ENCODE measurements at regions of chr2 and their contacts with region 1.

Region 1: GRCh38 chr2:236569573-236569973 is at the start of gene ACKR3:
- DNase-seq: peak; percentile 47 to 90 (median 78)
- ATAC-seq: peak; percentile 92 to 95 (median 94)
- H3K4me3 ChIP-seq: peak within 1 kb of the TSS; percentile 27 to 69
- H3K4me3 Mint-ChIP-seq: peak within 1 kb of the TSS; percentile 81 to 84 (median 84)
- H3K27ac ChIP-seq: peak within 1 kb of the TSS; percentile 37
- H3K27ac Mint-ChIP-seq: peak within 1 kb of the TSS in 1 of 2 donors; percentile 53
- H3K4me1 ChIP-seq: peaks cover 15 to 28% of the 10 kb centered on the region in 2 experiments
- H3K4me1 Mint-ChIP-seq: peaks cover 21 to 28% (median 21%) of the 10 kb centered on the region in 3 donors
- H3K27me3 ChIP-seq: no peaks in the 10 kb centered on the region
- H3K27me3 Mint-ChIP-seq: no peaks in the 10 kb centered on the region
- total RNA-seq, gene ACKR3: 3.3 to 6.9 (median 4.5) TPM

Region 2: DNA sequence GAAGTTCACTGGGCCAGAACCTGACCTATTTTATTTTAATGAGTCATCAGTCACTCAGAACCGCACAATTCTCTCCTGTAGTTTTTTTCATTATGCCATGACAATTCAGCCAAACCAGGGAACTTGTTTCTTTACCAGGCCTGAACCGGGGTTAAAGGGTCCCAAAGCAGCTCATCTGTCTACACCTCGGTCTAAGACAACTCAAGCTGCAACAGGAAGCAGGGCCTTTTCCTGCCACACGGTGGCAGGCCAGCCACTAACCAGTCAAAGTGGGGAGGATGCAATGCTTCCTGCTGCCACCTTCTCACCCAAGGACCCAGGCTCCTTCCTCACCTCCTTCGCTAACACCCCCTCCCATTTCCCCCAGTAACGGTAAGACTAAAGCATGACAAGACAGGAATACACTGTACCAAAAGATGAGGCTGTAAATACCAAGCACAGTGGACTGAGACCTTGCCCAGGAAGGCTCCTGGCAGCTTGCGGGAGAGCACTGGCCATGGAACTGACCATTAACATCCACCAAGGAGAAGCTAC is 56.6 kb before region 1 on chr2:
- CTCF ChIA-PET with region 1: interaction called, 25 to 109 read pairs
- POLR2A ChIA-PET with region 1: interaction called in 1 of 2 experiments, 6 read pairs
- DNase-seq: peak; percentile 33 to 82 (median 67)
- ATAC-seq: peak; percentile 92 to 98 (median 98)
- H3K4me3 ChIP-seq: no peak overlapping the region
- H3K4me3 Mint-ChIP-seq: no peak overlapping the region
- H3K27ac ChIP-seq: no peak overlapping the region
- H3K27ac Mint-ChIP-seq: no peak overlapping the region
- H3K4me1 ChIP-seq: peaks cover 0 to 7% of the 10 kb centered on the region in 2 experiments
- H3K4me1 Mint-ChIP-seq: no peaks in the 10 kb centered on the region
- H3K27me3 ChIP-seq: peaks cover 0 to 5% of the 10 kb centered on the region in 2 experiments
- H3K27me3 Mint-ChIP-seq: peaks cover 0 to 10% of the 10 kb centered on the region in 2 donors

Region 3: DNA sequence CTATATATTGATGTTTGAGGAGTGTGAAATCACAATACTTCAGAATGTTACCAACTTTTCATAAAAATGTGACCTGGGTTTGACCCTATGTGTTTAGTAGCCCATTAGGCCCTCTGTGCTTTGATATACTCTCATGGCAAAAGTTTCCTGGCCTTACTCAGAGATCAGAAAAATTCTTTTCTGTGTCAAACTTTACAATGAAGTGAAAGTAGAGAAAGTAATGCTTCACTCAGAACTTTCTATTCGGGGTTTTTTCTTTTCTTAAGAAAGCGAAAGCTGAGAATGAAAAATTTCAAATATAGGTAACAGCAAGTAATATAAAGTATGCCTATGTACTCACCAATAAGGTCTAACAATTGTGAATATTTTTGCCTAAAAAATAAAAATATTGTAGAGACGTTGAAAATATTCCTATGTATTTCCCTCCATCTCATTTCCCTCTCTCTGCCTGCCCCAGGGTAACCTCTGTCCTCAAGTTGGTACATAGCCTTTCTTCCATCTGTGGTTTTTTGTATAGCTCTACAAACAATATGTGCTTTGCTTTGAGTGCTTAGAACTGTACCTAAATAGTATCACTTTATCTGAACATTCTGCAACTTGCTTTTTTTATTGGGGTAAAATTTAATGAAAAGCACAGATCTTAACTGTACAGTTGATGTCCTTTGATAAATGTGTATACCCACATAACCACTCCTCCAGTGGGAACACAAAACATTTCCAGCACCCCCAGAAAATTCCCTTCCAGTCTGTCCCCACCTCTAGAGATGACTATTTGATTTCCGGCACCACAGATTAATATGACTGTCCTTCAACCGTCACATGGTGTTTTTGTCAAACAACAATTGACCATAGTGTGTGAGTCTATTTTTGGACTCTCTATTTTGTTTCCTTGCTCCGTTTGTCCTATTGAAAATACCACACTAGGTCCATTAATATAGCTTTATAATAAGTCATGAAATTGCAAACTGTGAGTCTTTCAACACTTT is 10.3 kb before region 1 on chr2:
- CTCF ChIA-PET with region 1: interaction called in 1 of 2 experiments, 12 read pairs
- POLR2A ChIA-PET with region 1: no interaction called
- DNase-seq: no peak
- ATAC-seq: no peak
- H3K4me3 ChIP-seq: no peak overlapping the region
- H3K4me3 Mint-ChIP-seq: peak overlapping the region in 1 of 3 donors; percentile 26
- H3K27ac ChIP-seq: no peak overlapping the region
- H3K27ac Mint-ChIP-seq: peak overlapping the region; percentile 17 to 50
- H3K4me1 ChIP-seq: peaks cover 9 to 23% of the 10 kb centered on the region in 2 experiments
- H3K4me1 Mint-ChIP-seq: peaks cover 36 to 59% (median 51%) of the 10 kb centered on the region in 3 donors
- H3K27me3 ChIP-seq: no peaks in the 10 kb centered on the region
- H3K27me3 Mint-ChIP-seq: no peaks in the 10 kb centered on the region

Region 4: GRCh38 chr2:236646441-236646840 is 76.9 kb after region 1 on chr2:
- CTCF ChIA-PET with region 1: no interaction called
- POLR2A ChIA-PET with region 1: no interaction called
- DNase-seq: no peak
- ATAC-seq: no peak
- H3K4me3 ChIP-seq: no peak overlapping the region
- H3K4me3 Mint-ChIP-seq: no peak overlapping the region
- H3K27ac ChIP-seq: no peak overlapping the region
- H3K27ac Mint-ChIP-seq: no peak overlapping the region
- H3K4me1 ChIP-seq: no peaks in the 10 kb centered on the region
- H3K4me1 Mint-ChIP-seq: no peaks in the 10 kb centered on the region
- H3K27me3 ChIP-seq: peaks cover 0 to 22% of the 10 kb centered on the region in 2 experiments
- H3K27me3 Mint-ChIP-seq: peaks cover 20 to 21% of the 10 kb centered on the region in 2 donors

Measured in T-cell (primary cell).